Right ventricle myocardium inferior (tissue), 1 donor: ENCODE measurements at regions of chr9 and their contacts with region 1.

Region 1: GRCh38 chr9:14251154-14252071 is 62.5 kb downstream of the NFIB start:
- DNase-seq: peak; percentile 79
- ATAC-seq: peak; percentile 93

Region 2: GRCh38 chr9:14030375-14031059 is 220.9 kb before region 1 on chr9:
- intact Hi-C with region 1: no loop called
- DNase-seq: no peak
- ATAC-seq: peak; percentile 46

Region 3: GRCh38 chr9:14212077-14212476 is 39.3 kb before region 1 on chr9:
- intact Hi-C with region 1: loop called (anchors 5 kb)
- DNase-seq: no peak
- ATAC-seq: no peak

Region 4: GRCh38 chr9:14302405-14302804 is 51.0 kb after region 1 on chr9:
- intact Hi-C with region 1: loop called (anchors 5 kb)
- DNase-seq: no peak
- ATAC-seq: no peak